Activated CD4-positive, alpha-beta memory T cell treated with anti-CD3 and anti-CD28 coated beads for 36 hours (primary cell): ENCODE measurements at regions of chr4 and their contacts with region 1.

Region 1: GRCh38 chr4:6478546-6479220 is 6.3 kb upstream of the PPP2R2C start:
- DNase-seq: no peak
- H3K4me3 Mint-ChIP-seq: no peak overlapping the region
- H3K27ac Mint-ChIP-seq: no peak overlapping the region
- H3K4me1 Mint-ChIP-seq: no peaks in the 10 kb centered on the region
- H3K27me3 Mint-ChIP-seq: peaks cover 39% of the 10 kb centered on the region

Region 2: DNA sequence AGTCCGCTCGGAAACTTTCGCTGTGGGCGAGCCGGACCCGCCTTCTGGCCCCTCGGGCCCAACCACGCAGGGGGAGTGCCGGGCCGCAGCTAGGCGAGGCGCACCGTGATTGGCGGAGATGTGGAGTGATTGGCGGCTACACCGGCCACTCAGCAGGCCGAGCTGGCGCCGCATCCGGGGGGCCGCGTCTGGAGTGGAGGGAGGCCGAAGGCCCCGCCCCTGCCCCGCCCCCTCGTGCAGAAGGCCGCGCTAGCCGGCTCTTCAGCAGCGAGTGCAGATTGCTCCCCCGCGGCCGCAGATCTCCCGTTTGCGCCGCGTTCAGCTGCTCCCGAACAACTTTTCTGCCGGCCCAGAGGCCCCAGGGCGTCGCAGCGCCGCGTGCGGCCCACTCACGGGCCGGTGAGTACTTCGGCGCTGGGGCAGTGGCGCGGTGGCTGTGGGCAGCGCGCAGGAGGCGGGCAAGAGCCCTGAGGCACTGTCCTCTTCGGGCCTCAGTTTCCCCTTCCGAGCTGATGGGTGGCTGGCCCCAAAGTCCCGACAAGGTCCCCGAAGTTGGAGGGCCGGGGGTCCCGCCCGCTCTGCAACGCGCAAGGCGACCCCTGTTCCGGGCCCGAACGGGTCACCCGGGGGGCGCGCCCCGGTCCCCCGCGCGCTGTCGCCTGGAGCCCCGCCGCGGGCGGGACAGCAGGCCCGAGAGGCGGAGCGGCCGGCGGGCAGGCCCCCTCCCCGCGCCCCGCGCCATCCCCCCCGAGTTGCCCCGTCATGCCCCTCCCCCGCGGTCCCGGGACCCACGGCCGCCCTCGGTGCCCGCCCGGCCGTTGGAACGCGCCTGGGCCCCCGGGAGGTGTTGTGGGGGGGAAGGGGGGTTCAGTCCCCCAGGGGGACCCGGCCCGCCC is 208.8 kb before region 1 on chr4 and contains the start of gene WFS1:
- CTCF ChIA-PET with region 1: no interaction called
- POLR2A ChIA-PET with region 1: no interaction called
- intact Hi-C with region 1: no loop called
- DNase-seq: peak; percentile 99
- H3K4me3 Mint-ChIP-seq: peak within 1 kb of the TSS; percentile 73
- H3K27ac Mint-ChIP-seq: no peak within 1 kb of the TSS
- H3K4me1 Mint-ChIP-seq: peaks cover 8% of the 10 kb centered on the region
- H3K27me3 Mint-ChIP-seq: peaks cover 3% of the 10 kb centered on the region
- total RNA-seq, gene WFS1: 4.6 to 5.3 TPM

Region 3: DNA sequence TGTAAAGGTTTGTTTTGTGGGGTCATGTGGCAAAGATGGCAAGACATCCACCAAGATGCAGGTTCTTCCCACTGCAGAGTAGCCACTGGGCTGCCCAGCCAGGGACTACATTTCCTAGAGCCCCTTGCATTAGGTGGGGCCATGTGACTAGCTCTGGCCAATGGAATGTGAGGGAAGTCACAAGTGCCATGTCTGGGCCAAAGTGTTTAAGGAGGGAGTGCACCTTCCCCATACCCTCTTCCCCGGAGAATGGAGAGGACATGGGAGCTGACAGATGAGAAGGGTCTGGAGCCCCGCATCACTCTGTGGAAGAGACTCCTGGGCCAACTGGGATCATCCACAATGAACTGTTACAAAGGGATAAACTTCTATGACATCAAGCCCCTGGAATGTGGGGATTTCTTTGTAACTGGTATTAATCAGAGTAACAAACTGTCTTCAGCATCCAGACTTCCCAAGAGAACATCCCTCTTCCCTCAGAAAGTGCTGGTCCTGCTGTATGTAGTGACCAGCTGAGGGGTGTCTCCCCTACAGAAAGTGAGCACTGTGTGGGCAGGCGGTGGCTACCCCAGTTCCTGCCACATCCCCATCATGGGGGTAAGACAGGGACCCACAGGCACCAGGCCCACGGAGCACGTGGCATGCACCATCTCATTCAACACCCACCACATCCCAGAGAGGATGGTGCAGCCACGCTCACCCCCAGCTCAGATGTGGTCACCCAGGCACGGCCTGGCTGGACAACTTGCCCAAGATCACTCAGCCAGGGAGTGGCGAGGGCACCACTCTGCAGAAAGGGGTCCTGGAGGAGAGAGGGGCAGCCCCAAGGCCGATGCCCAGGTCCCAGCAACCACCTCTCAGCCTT is 17.1 kb before region 1 on chr4:
- CTCF ChIA-PET with region 1: no interaction called
- POLR2A ChIA-PET with region 1: no interaction called
- intact Hi-C with region 1: loop called (anchors 1 kb)
- DNase-seq: no peak
- H3K4me3 Mint-ChIP-seq: no peak overlapping the region
- H3K27ac Mint-ChIP-seq: no peak overlapping the region
- H3K4me1 Mint-ChIP-seq: no peaks in the 10 kb centered on the region
- H3K27me3 Mint-ChIP-seq: peaks cover 33% of the 10 kb centered on the region